ENCODE measurements at regions of chr3 and their contacts with region 1.

Region 1: GRCh38 chr3:108897883-108898282 is 55.8 kb downstream of the GUCA1C start:
- DNase-seq: no peak
- ATAC-seq: no peak
- H3K4me3 ChIP-seq: no peak overlapping the region
- H3K27ac ChIP-seq: no peak overlapping the region
- H3K4me1 ChIP-seq: no peaks in the 10 kb centered on the region
- H3K27me3 ChIP-seq: no peaks in the 10 kb centered on the region
- CTCF ChIP-seq: no peak
- POLR2A ChIP-seq: no peak
- RAD21 ChIP-seq: no peak

Region 2: DNA sequence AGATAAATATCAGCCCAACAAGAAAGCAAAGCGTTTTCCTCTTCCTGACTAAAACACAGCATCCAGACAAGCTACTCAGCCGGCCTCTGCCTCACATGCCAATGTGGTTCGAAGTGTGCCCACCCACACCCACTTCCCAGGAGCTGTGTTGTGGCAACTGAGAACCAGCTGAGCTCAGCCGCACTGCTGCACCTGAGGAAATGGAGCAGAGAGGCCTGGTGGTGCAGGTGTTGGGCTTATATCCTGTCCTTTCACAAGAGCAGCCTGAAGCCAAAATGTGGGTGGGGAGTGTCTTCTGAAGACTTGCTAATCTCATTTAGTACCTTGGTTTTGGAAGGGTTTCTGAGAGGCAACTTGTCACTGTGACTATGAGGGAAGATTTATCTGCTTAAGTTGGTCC is 117.6 kb before region 1 on chr3:
- CTCF ChIA-PET with region 1: no interaction called
- POLR2A ChIA-PET with region 1: no interaction called
- dilution Hi-C with region 1: no loop called
- in situ Hi-C with region 1: loop called (anchors 25 kb)
- intact Hi-C with region 1: no loop called
- DNase-seq: no peak
- ATAC-seq: no peak
- H3K4me3 ChIP-seq: no peak overlapping the region
- H3K27ac ChIP-seq: no peak overlapping the region
- H3K4me1 ChIP-seq: no peaks in the 10 kb centered on the region
- H3K27me3 ChIP-seq: no peaks in the 10 kb centered on the region
- CTCF ChIP-seq: no peak
- POLR2A ChIP-seq: no peak
- RAD21 ChIP-seq: no peak

Region 3: GRCh38 chr3:109028753-109029152 is 130.9 kb after region 1 on chr3:
- CTCF ChIA-PET with region 1: no interaction called
- POLR2A ChIA-PET with region 1: no interaction called
- dilution Hi-C with region 1: no loop called
- in situ Hi-C with region 1: no loop called
- intact Hi-C with region 1: no loop called
- DNase-seq: no peak
- ATAC-seq: no peak
- H3K4me3 ChIP-seq: no peak overlapping the region
- H3K27ac ChIP-seq: no peak overlapping the region
- H3K4me1 ChIP-seq: no peaks in the 10 kb centered on the region
- H3K27me3 ChIP-seq: no peaks in the 10 kb centered on the region
- CTCF ChIP-seq: no peak
- POLR2A ChIP-seq: no peak
- RAD21 ChIP-seq: no peak